PC-3 (cell line): ENCODE measurements at regions of chr16 and their contacts with region 1.

Region 1: GRCh38 chr16:23324730-23325129 is 22.6 kb downstream of the SCNN1B start:
- DNase-seq: peak; percentile 95
- ATAC-seq: peak; percentile 98
- H3K4me3 ChIP-seq: no peak overlapping the region
- H3K27ac ChIP-seq: peak overlapping the region; percentile 43
- H3K4me1 ChIP-seq: peaks cover 13% of the 10 kb centered on the region
- H3K27me3 ChIP-seq: no peaks in the 10 kb centered on the region
- CTCF ChIP-seq: no peak

Region 2: GRCh38 chr16:23384878-23385277 is 60.1 kb after region 1 on chr16:
- CTCF ChIA-PET with region 1: no interaction called
- POLR2A ChIA-PET with region 1: no interaction called
- intact Hi-C with region 1: loop called (anchors 1 kb)
- DNase-seq: no peak
- ATAC-seq: no peak
- H3K4me3 ChIP-seq: no peak overlapping the region
- H3K27ac ChIP-seq: no peak overlapping the region
- H3K4me1 ChIP-seq: no peaks in the 10 kb centered on the region
- H3K27me3 ChIP-seq: no peaks in the 10 kb centered on the region
- CTCF ChIP-seq: no peak

Region 3: GRCh38 chr16:23435500-23435899 is 110.8 kb after region 1 on chr16:
- CTCF ChIA-PET with region 1: interaction called, 4 read pairs
- POLR2A ChIA-PET with region 1: no interaction called
- intact Hi-C with region 1: loop called (anchors 1 kb)
- DNase-seq: peak; percentile 72
- ATAC-seq: peak; percentile 93
- H3K4me3 ChIP-seq: no peak overlapping the region
- H3K27ac ChIP-seq: no peak overlapping the region
- H3K4me1 ChIP-seq: no peaks in the 10 kb centered on the region
- H3K27me3 ChIP-seq: no peaks in the 10 kb centered on the region
- CTCF ChIP-seq: peak; percentile 87